ENCODE measurements at regions of chr1 and their contacts with region 1.

Region 1: GRCh38 chr1:115330480-115331013 is 7.5 kb downstream of the NGF start:
- DNase-seq: peak in 4 of 5 donors; percentile 42 to 56 (median 51)
- H3K4me3 ChIP-seq: no peak overlapping the region
- H3K27ac ChIP-seq: peak overlapping the region in 1 of 2 donors; percentile 65
- H3K4me1 ChIP-seq: peaks cover 35% of the 10 kb centered on the region
- H3K27me3 ChIP-seq: no peaks in the 10 kb centered on the region
- CTCF ChIP-seq: peak in 1 of 3 donors; percentile 37
- EP300 ChIP-seq: no peak
- POLR2A ChIP-seq: no peak

Region 2: DNA sequence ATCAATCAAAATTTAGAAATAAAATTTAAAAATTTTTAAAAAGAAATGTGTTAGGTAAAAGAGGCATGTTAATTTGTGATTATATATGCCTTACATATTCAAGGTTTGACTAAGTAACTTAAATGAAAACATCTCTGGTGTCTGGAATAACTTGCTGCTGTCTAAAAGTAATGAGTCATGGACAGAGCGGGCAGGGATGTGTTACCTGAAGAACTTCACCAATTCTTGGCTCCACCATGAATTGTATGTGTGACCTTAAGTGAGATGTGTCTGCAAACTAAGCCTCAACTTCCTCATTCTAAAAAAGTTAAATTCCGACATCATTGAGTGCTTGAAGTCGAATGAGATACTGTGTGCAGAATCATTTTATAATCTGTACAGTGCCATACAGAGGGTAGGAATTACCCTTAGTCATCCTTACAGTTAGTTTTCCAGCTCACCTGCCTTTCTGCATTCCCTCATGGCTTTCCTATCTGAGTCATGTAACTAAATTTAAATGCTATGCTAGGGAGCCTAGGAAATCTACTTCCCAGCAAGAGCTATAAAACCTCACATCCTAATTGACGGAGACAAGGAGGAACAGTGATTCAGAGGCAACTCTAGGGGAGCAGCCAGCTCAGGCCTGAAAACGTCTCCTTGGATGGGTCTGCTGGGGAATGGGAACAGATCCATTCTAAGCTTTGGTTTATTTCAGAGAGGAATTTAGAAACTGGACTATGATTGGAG is 140.6 kb before region 1 on chr1:
- intact Hi-C with region 1: no loop called
- DNase-seq: peak in 1 of 5 donors; percentile 34
- H3K4me3 ChIP-seq: no peak overlapping the region
- H3K27ac ChIP-seq: peak overlapping the region in 1 of 2 donors; percentile 53
- H3K4me1 ChIP-seq: peaks cover 5% of the 10 kb centered on the region
- H3K27me3 ChIP-seq: no peaks in the 10 kb centered on the region
- CTCF ChIP-seq: no peak
- EP300 ChIP-seq: no peak
- POLR2A ChIP-seq: no peak

Region 3: GRCh38 chr1:115282807-115283208 is 47.7 kb before region 1 on chr1:
- intact Hi-C with region 1: loop called in 2 of 4 experiments (anchors 2 to 10 kb)
- DNase-seq: peak; percentile 87 to 94 (median 90)
- H3K4me3 ChIP-seq: no peak overlapping the region
- H3K27ac ChIP-seq: peak overlapping the region; percentile 92 to 97
- H3K4me1 ChIP-seq: peaks cover 22% of the 10 kb centered on the region
- H3K27me3 ChIP-seq: no peaks in the 10 kb centered on the region
- CTCF ChIP-seq: no peak
- EP300 ChIP-seq: no peak
- POLR2A ChIP-seq: peak; percentile 44